Left ventricle myocardium inferior (tissue), 1 donor: ENCODE measurements at regions of chr22 and their contacts with region 1.

Region 1: DNA sequence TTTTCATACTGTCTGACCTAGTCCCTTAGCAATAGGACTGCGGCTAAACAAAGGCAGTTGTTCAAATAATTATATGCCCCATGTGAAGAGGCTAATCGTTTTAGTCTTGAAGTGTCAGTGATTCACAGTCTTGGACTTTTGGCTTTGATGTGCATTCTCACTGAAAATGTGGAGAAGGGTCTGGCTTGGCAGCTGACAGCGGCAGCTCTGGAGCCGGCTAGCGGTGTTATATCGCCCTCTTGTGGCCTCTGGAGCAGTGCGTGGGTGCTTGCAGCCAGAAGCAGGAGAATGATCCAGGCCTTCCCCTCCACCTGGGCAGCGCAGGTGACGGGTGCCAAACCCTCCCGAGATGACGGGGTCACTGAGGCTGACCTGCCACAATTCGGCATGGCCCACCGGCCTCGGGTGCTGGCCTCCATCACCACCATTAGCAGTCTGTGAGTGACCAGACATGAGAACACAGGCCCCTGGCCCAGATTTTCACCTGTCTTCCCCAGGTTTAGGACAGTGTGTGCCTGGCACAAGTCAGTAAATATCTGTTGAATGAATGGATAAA is 90.3 kb upstream of the PITPNB start:
- DNase-seq: peak; percentile 69
- H3K4me3 ChIP-seq: no peak overlapping the region
- H3K27ac ChIP-seq: no peak overlapping the region
- H3K4me1 ChIP-seq: peaks cover 31% of the 10 kb centered on the region
- H3K27me3 ChIP-seq: no peaks in the 10 kb centered on the region
- CTCF ChIP-seq: peak; percentile 99

Region 2: DNA sequence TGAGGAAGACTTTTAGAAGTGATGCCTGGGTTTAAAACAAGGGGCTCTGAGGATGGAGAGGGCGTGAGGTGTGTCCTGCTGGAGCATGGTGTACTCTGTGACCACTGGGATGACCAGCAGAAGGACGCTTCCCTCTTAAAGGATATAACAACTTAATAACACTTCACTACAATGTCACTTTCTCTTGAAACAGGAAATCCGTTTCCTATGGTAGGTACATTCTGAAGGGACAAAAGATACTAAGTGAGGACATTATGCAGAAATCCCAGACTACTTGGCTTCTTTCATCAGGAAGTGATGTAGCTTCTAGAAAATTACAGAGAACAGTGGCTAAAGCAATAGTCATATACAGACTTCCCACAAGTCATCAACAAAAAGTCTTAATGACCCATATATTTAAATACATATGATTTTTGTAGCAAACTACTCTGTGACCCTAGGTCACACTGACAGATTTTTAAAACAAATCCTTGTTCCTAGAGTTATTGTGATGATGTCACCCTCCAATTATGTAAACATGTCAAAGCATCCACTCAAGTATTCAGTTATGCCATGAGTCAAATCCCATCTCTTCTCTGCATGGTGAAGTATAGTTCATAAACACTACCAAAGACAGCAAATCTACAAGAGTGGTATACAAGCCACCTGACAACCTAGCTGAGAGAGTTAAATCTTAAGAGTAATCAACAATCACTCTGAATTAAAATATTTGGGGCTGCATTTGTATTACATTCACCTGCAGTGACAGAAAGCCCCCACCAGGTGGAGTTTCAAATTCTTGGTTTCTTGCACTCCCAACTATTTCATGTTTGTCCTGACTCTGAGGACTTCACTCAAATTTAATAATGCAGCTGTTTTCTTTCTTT is 123.1 kb before region 1 on chr22:
- intact Hi-C with region 1: loop called (anchors 5 kb)
- DNase-seq: no peak
- H3K4me3 ChIP-seq: no peak overlapping the region
- H3K27ac ChIP-seq: peak overlapping the region; percentile 66
- H3K4me1 ChIP-seq: peaks cover 65% of the 10 kb centered on the region
- H3K27me3 ChIP-seq: no peaks in the 10 kb centered on the region
- CTCF ChIP-seq: peak; percentile 91

Region 3: GRCh38 chr22:28075358-28075981 is 66.1 kb after region 1 on chr22:
- intact Hi-C with region 1: no loop called
- DNase-seq: peak; percentile 20
- H3K4me3 ChIP-seq: no peak overlapping the region
- H3K27ac ChIP-seq: peak overlapping the region; percentile 83
- H3K4me1 ChIP-seq: peaks cover 22% of the 10 kb centered on the region
- H3K27me3 ChIP-seq: no peaks in the 10 kb centered on the region
- CTCF ChIP-seq: no peak